ENCODE measurements at regions of chr3 and their contacts with region 1.

Region 1: GRCh38 chr3:41477399-41478014 is 278.2 kb downstream of the CTNNB1 start:
- DNase-seq: no peak
- H3K4me3 ChIP-seq: no peak overlapping the region
- H3K27ac ChIP-seq: no peak overlapping the region
- H3K4me1 ChIP-seq: no peaks in the 10 kb centered on the region
- H3K27me3 ChIP-seq: no peaks in the 10 kb centered on the region
- CTCF ChIP-seq: no peak
- POLR2A ChIP-seq: no peak

Region 2: DNA sequence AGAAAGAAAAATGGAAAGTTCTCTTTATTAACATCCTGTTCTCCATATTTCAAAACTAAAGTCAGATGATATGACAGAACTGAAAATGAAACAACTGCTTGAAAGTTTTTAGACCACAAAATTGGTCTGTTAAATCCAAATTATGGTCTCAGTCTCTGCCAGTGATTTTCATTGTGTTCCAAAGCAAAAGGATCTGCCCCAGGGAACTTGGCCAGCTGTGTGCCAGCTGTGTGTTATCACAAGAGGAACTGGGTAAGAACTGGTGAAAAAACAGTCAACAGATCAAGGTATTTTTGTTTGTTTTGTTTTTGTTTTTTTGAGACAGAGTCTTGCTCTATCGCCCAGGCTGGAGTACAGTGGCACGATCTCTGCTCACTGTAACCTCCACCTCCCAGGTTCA is 45.1 kb after region 1 on chr3:
- CTCF ChIA-PET with region 1: no interaction called
- POLR2A ChIA-PET with region 1: no interaction called
- dilution Hi-C with region 1: no loop called
- intact Hi-C with region 1: loop called (anchors 5 kb)
- DNase-seq: no peak
- H3K4me3 ChIP-seq: no peak overlapping the region
- H3K27ac ChIP-seq: no peak overlapping the region
- H3K4me1 ChIP-seq: no peaks in the 10 kb centered on the region
- H3K27me3 ChIP-seq: no peaks in the 10 kb centered on the region
- CTCF ChIP-seq: no peak
- POLR2A ChIP-seq: no peak